ENCODE measurements at regions of chr14 and their contacts with region 1.

Region 1: DNA sequence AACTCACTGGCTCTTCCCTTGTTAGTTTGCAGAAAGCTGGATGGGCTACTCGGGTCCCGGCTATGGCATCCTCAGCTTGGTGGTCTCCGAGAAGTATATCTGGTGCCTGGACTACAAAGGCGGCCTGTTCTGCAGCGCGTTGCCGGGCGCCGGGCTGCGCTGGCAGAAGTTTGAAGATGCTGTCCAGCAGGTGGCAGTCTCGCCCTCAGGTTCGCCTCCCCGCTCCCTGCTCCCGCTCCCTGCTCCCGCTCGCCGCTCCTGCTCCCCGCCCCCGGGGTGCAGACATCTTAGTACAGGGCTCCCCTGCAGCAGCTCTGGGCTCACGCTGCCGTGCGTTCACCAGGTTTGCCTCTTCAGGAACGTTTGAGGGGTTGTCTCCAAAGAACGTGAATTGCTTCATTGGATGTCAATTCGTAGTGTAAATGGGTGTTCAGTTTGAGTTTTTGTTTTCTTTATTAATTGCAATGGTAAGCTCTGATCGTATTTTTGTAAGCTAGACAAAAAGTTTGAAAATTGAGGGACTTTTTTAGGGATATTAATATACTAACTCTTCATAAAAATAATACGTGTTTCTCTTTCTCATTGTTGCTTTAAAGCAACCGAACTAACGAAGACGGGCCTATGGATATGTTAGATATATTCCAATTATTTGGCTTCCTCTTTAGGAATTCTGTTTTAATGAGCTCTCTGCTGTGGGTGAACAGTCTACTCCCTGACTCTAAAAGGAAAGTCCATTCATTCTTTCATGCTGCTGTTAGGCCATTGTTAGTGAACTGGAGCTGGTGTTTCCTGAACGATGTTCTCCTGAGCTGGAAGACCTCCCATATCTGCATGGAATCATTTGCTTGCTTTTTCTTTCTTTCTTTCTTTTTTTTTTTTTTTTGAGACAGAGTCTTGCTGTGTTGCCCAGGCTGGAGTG is 71.3 kb downstream of the ANKRD9 start:
- DNase-seq: peak; percentile 82
- ATAC-seq: peak; percentile 71
- H3K4me3 ChIP-seq: peak overlapping the region; percentile 51
- H3K27ac ChIP-seq: no peak overlapping the region
- H3K4me1 ChIP-seq: peaks cover 24% of the 10 kb centered on the region
- H3K27me3 ChIP-seq: no peaks in the 10 kb centered on the region
- CTCF ChIP-seq: peak; percentile 90

Region 2: DNA sequence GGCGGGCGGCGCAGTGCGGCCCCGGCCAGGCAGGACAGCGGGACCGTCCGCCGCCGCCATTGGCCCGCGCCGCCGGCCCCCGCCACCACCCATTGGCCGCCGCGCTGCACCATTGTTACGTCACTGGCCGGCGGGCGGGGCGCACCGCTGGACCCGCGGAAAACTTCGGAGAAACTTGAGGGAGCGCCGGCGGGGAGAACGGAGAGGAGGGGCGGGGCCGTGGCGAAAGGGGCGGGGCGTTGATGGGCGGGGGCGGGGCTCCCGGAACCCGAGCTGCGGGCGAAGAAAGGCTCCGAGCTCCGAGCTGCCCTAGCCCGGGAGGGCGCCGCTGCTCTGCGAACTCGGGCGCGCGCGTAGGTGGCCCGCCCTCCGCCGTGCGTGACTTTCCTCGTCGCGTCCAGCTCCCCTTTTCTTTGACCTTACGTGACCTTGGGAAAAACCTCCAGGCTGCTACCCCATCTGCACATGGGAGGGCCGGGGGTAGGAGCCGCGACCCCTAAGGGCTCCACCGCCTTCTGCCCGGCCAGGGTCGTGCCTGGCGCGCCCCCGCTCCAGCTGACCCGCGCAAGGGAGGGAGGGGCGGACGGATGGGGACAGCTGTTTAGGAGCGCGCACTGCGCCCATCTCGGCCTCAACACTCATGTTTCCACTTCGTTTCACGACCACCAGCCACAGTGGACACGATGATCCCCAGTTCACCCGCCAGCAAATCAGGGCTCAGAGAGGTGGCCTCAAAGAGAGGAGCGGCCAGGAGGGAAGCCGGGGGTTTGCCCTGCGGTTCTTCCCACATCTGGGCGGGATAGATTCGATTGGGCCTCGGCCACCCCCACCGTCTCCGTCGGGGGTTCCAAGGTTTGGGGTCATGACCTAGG is 71.7 kb after region 1 on chr14 and contains the start of gene ANKRD9:
- CTCF ChIA-PET with region 1: interaction called, 9 read pairs
- POLR2A ChIA-PET with region 1: interaction called, 6 read pairs
- intact Hi-C with region 1: loop called (anchors 2 kb)
- DNase-seq: peak; percentile 96
- ATAC-seq: peak; percentile 77
- H3K4me3 ChIP-seq: peak within 1 kb of the TSS; percentile 80
- H3K27ac ChIP-seq: peak within 1 kb of the TSS; percentile 71
- H3K4me1 ChIP-seq: peaks cover 22% of the 10 kb centered on the region
- H3K27me3 ChIP-seq: no peaks in the 10 kb centered on the region
- CTCF ChIP-seq: no peak
- total RNA-seq, gene ANKRD9: 52.6 and 87.6 TPM in 2 replicates